Left ventricle myocardium superior (tissue), 1 donor: ENCODE measurements at regions of chr3 and their contacts with region 1.

Region 1: GRCh38 chr3:123267821-123268220 is 66.1 kb downstream of the SEC22A start:
- DNase-seq: no peak
- ATAC-seq: no peak

Region 2: DNA sequence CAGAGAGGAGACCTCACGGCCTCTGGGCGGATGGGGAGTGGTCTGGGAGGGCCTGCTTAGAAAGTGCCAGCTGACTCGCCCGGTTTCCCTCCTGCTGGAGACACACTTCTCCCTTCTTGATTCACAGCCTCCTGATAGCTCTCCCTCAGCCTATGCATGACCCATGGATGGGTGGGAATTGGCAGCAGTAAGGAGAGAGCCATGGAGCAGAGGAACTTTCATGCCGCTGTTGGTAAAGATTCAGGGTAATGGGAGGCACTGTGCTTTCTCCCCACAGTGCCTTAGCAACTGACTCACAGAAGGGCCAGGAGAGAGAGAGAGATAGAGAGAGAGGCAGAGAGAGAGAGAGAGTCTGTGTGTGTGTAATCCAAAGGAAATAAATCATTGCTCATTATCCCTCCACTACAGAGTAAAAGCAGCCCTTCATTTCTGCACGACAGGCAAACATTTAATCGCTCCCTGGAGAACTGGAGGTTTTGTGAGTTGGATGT is 323.1 kb before region 1 on chr3:
- intact Hi-C with region 1: loop called (anchors 5 kb)
- DNase-seq: no peak
- ATAC-seq: no peak